ENCODE measurements at regions of chr17 and their contacts with region 1.

Region 1: DNA sequence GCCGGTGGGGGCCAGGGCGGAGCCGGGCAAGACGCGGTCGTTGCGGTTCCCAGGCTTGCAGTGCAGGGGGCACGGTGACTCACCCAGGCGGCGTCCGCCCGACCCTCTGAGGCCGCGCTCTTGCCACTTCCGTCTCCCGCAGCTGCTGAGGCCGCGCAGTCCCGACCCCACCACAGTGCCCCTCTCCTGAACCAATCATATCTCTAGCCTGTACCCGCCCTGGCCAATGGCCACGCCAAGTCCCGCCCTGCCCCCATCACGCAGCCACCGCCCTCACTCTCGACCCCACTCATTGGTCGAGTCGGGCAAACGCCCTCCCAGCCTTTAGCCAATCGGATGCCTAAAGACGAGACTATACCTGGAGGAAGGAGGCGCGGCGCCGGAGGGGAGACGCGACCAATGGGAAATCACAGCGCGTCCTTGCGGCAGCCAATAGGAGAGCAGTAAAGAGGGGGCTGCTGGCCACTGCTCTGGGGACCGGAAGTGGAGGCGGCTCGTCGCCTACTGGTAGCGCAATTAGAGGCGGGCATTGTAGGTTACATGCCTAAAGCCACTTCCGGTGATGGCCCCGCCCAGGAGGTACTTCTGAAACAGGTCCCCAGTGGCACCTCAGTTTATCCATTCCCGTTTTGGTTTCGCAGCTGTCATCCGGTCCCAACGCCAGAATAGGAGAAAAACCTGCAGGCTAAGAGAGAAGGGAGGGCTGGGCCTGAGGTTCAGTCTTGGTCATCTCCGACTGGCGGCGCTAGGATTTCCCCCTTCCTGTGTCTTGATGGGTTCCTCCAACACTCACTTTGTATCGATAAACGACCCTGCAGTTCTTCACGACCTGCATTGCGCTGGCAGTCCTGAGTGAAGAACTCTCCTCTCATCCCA is 3.5 kb upstream of the MTMR4 start:
- DNase-seq: peak; percentile 97 to 100 (median 98)
- ATAC-seq: peak; percentile 92
- H3K4me3 ChIP-seq: peak overlapping the region; percentile 83
- H3K27ac ChIP-seq: peak overlapping the region; percentile 89
- H3K4me1 ChIP-seq: peaks cover 29 to 30% of the 10 kb centered on the region in 2 experiments
- H3K27me3 ChIP-seq: no peaks in the 10 kb centered on the region
- CTCF ChIP-seq: no peak
- EP300 ChIP-seq: no peak; the same call in 1 of the 2 replicates
- POLR2A ChIP-seq: peak; percentile 77
- RAD21 ChIP-seq: no peak

Region 2: DNA sequence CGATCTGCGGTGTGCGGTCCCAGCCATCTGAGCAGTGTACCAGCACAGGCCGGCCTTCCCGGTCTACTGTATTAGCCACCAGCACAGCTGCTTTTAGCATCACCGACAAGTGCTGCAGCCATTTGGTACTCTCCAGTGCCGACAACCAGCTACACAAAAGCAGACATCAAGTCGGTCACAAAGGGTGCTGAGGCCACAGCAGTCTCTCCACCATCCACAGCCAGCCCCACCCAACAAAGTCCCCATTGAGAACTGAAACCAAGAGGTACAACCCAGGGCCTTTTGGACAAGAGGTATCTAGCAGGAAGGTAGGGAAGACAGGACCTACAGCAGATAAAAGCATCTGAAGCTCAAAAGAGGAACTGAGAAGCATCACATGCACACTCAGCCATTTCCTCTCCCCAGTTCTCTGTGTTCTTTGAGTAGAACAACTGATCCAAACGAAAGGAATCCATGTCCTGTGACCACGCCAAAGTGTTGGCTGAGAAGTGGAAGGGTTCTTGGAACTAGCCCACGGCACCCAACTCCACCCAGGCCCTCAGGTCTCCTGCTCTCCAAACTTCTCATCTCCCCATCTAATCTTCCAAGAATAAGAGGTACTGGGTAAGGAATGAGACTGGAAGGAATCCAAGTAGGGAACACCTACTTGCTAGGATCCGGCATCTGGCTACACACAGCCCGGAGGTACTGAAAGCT is 13.0 kb before region 1 on chr17:
- CTCF ChIA-PET with region 1: no interaction called
- POLR2A ChIA-PET with region 1: interaction called, 11 read pairs
- in situ Hi-C with region 1: no loop called
- intact Hi-C with region 1: no loop called
- DNase-seq: no peak
- ATAC-seq: no peak
- H3K4me3 ChIP-seq: no peak overlapping the region
- H3K27ac ChIP-seq: no peak overlapping the region
- H3K4me1 ChIP-seq: no peaks in the 10 kb centered on the region
- H3K27me3 ChIP-seq: no peaks in the 10 kb centered on the region
- CTCF ChIP-seq: no peak
- EP300 ChIP-seq: no peak
- POLR2A ChIP-seq: no peak
- RAD21 ChIP-seq: no peak

Region 3: DNA sequence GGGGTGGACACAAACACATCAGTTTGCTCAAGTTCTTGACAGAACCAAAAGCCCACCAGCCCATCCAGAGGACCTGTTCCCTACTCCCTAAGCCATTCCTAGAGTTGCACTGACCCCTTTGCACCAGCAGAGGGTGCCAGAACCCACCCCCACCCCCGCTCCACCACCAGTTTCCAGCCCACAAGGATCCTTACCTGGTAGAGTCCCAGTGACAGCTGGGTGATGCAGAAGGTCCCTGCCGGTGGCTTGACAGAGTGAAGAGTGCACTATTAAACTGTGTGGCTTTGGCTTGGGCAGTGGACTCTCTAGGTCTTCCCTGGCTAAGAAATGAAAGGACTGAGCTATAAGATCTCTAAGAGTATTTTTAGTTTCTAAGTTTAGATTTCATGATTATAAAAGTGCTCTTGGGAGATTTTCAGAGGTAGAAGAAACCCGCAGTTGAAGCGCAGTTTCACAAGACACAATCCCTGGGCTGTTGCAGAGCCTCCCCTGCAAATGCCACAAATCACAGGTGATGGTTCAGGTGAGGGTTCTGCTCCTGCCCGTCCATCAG is 69.8 kb after region 1 on chr17:
- CTCF ChIA-PET with region 1: no interaction called
- POLR2A ChIA-PET with region 1: interaction called, 4 read pairs
- in situ Hi-C with region 1: no loop called
- intact Hi-C with region 1: loop called (anchors 5 kb)
- DNase-seq: peak; percentile 73 to 90 (median 84)
- ATAC-seq: peak; percentile 94
- H3K4me3 ChIP-seq: no peak overlapping the region
- H3K27ac ChIP-seq: no peak overlapping the region
- H3K4me1 ChIP-seq: no peaks in the 10 kb centered on the region
- H3K27me3 ChIP-seq: peaks cover 5 to 11% of the 10 kb centered on the region in 2 experiments; a peak in 3 of 5 replicates
- CTCF ChIP-seq: peak; percentile 83 to 94 (median 87)
- EP300 ChIP-seq: no peak
- POLR2A ChIP-seq: no peak
- RAD21 ChIP-seq: peak; percentile 77 to 84

Region 4: GRCh38 chr17:58640222-58641000 is 122.4 kb after region 1 on chr17:
- CTCF ChIA-PET with region 1: no interaction called
- POLR2A ChIA-PET with region 1: no interaction called
- in situ Hi-C with region 1: no loop called
- intact Hi-C with region 1: no loop called
- DNase-seq: no peak
- ATAC-seq: no peak
- H3K4me3 ChIP-seq: no peak overlapping the region
- H3K27ac ChIP-seq: no peak overlapping the region
- H3K4me1 ChIP-seq: no peaks in the 10 kb centered on the region; a peak in 1 of 5 replicates
- H3K27me3 ChIP-seq: no peaks in the 10 kb centered on the region
- CTCF ChIP-seq: no peak
- EP300 ChIP-seq: no peak
- POLR2A ChIP-seq: no peak
- RAD21 ChIP-seq: no peak

Region 5: DNA sequence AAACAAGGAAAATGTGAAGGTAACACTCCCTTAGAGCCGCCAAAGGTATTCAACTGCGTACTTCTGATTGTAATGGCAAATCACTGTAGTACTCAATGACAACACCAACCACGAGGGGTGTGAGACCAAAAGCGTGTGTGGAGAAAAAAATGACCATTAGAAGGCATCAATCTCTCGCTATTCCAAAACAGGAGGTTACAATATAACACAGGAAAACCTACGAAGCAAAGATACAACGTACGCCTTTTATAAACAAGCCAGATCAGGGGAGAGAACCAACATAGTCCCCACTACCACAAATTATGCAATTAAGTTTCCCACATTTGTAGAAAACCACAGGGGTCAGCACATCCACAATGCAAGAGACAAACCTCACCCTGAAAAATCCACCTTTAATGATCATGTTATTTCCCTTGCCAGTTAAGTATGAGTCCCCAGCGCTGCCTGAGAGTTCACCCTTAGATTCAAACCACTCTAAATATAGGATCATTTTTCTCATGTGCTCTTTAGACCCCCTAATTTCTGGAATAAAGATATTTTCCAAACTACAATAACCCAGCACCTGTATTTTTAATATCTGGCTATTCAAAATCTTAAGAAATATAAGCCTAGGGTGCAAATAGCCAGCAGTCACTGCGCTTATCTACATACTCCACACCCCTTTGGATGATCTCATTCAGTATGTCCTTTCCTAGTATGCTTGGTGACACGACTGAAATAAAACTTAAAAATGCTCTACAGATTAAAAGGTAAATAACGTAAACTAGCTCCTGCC is 161.5 kb after region 1 on chr17:
- CTCF ChIA-PET with region 1: no interaction called
- POLR2A ChIA-PET with region 1: interaction called, 5 read pairs
- in situ Hi-C with region 1: no loop called
- intact Hi-C with region 1: loop called (anchors 1 kb)
- DNase-seq: peak; percentile 62 to 93 (median 75)
- ATAC-seq: peak; percentile 96
- H3K4me3 ChIP-seq: no peak overlapping the region
- H3K27ac ChIP-seq: peak overlapping the region; percentile 92
- H3K4me1 ChIP-seq: peaks cover 0 to 3% of the 10 kb centered on the region in 2 experiments; a peak in 2 of 5 replicates
- H3K27me3 ChIP-seq: no peaks in the 10 kb centered on the region
- CTCF ChIP-seq: peak; percentile 14 to 33 (median 30); a peak in 2 of 6 replicates
- EP300 ChIP-seq: peak; percentile 84
- POLR2A ChIP-seq: peak; percentile 100
- RAD21 ChIP-seq: peak; percentile 28 to 81; a peak in 3 of 4 replicates

Region 6: GRCh38 chr17:58703137-58703972 is 185.4 kb after region 1 on chr17:
- CTCF ChIA-PET with region 1: no interaction called
- POLR2A ChIA-PET with region 1: no interaction called
- in situ Hi-C with region 1: no loop called
- intact Hi-C with region 1: no loop called
- DNase-seq: no peak
- ATAC-seq: no peak
- H3K4me3 ChIP-seq: no peak overlapping the region
- H3K27ac ChIP-seq: no peak overlapping the region
- H3K4me1 ChIP-seq: peaks cover 5 to 7% of the 10 kb centered on the region in 2 experiments; a peak in 3 of 5 replicates
- H3K27me3 ChIP-seq: no peaks in the 10 kb centered on the region
- CTCF ChIP-seq: no peak
- EP300 ChIP-seq: no peak
- POLR2A ChIP-seq: no peak
- RAD21 ChIP-seq: no peak

Measured in K562 (cell line).